GM23248 (cell line): ENCODE measurements at regions of chr1 and their contacts with region 1.

Region 1: GRCh38 chr1:168603501-168604110 is 27.2 kb downstream of the XCL1 start:
- DNase-seq: peak; percentile 82
- H3K4me3 ChIP-seq: no peak overlapping the region
- H3K27ac ChIP-seq: no peak overlapping the region
- H3K4me1 ChIP-seq: peaks cover 6% of the 10 kb centered on the region
- H3K27me3 ChIP-seq: no peaks in the 10 kb centered on the region

Region 2: DNA sequence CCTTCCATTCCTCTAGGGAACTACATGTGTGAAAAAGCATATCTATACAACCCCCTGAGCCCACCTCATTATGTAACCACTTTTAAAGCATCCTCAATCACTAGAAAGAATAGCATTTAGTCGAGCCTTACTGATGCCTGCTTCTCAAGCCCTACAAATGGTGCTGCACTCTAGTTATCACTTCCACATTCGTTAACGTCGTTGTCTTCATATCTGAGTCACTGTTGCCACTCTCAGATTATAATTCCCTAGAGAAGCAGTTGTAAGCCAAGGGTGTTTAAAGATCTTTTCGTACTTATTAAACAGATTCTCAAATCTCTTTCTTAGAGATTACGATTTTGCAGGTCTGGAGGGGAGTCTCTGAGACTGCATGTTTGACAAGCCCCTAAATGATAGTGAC is 519.4 kb after region 1 on chr1:
- in situ Hi-C with region 1: loop called (anchors 10 kb)
- DNase-seq: no peak
- H3K4me3 ChIP-seq: no peak overlapping the region
- H3K27ac ChIP-seq: no peak overlapping the region
- H3K4me1 ChIP-seq: peaks cover 21% of the 10 kb centered on the region
- H3K27me3 ChIP-seq: no peaks in the 10 kb centered on the region

Region 3: GRCh38 chr1:169348383-169349036 is 744.9 kb after region 1 on chr1:
- in situ Hi-C with region 1: loop called (anchors 10 kb)
- DNase-seq: peak; percentile 71
- H3K4me3 ChIP-seq: no peak overlapping the region
- H3K27ac ChIP-seq: no peak overlapping the region
- H3K4me1 ChIP-seq: no peaks in the 10 kb centered on the region
- H3K27me3 ChIP-seq: no peaks in the 10 kb centered on the region